A549 (cell line): ENCODE measurements at regions of chr12 and their contacts with region 1.

Region 1: DNA sequence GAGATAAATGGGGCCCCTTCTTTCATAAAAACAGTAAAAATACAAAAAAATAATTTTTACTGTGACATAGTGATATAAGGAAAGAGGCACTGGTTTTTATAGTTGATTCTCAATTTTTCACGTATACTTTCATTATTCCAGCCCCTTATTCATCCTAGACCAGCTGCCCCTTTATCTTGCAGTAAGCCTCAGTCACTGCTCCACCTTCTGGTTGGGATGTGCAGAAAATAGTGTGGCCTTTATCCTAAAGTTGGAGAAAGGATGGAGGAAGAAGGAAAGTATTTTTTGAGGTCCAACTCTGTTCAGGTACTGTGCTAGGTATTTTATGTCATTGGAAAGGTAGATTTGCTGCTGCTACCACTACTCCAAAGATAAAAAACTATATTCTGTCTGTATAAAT is 172.7 kb downstream of the ANO6 start:
- DNase-seq: peak; percentile 51 to 54
- ATAC-seq: peak; percentile 82 to 89
- H3K4me3 ChIP-seq: no peak overlapping the region
- H3K27ac ChIP-seq: no peak overlapping the region
- H3K4me1 ChIP-seq: no peaks in the 10 kb centered on the region
- CTCF ChIP-seq: peak; percentile 78
- EP300 ChIP-seq: no peak
- POLR2A ChIP-seq: no peak
- RAD21 ChIP-seq: peak; percentile 74 to 84

Region 2: GRCh38 chr12:44774815-44775411 is 613.6 kb before region 1 on chr12:
- CTCF ChIA-PET with region 1: no interaction called
- POLR2A ChIA-PET with region 1: no interaction called
- DNase-seq: peak; percentile 3 to 42
- ATAC-seq: peak; percentile 34 to 77; a peak in 3 of 6 replicates
- H3K4me3 ChIP-seq: no peak overlapping the region
- H3K27ac ChIP-seq: no peak overlapping the region
- H3K4me1 ChIP-seq: no peaks in the 10 kb centered on the region
- CTCF ChIP-seq: peak; percentile 60
- EP300 ChIP-seq: no peak
- POLR2A ChIP-seq: no peak
- RAD21 ChIP-seq: peak; percentile 32 to 54; a peak in 4 of 5 replicates

Region 3: GRCh38 chr12:45183246-45183645 is 205.3 kb before region 1 on chr12:
- CTCF ChIA-PET with region 1: interaction called, 30 read pairs
- POLR2A ChIA-PET with region 1: no interaction called
- DNase-seq: peak; percentile 12 to 13
- ATAC-seq: peak in 1 of 2 experiments; percentile 54; a peak in 2 of 6 replicates
- H3K4me3 ChIP-seq: no peak overlapping the region
- H3K27ac ChIP-seq: no peak overlapping the region
- H3K4me1 ChIP-seq: no peaks in the 10 kb centered on the region
- CTCF ChIP-seq: peak; percentile 52
- EP300 ChIP-seq: no peak
- POLR2A ChIP-seq: no peak
- RAD21 ChIP-seq: peak; percentile 72 to 73

Region 4: DNA sequence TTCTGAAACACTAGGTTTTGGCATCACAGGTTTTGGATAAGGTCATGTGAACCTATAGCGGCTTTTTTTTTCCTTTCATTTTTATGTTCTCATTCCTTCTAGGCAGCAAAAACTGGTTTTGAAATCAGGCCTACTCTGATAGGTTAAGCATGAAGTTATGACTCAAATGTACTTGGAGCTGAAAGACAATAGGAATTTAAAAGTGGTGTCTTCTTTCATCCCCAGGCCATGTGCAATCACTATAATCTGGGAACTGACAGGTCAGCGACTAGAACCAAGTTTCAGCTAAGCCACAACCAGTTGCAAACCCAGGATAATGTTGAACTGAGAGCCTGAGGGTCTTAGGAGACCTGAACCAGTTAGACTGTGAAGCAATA is 98.4 kb before region 1 on chr12:
- CTCF ChIA-PET with region 1: interaction called, 11 read pairs
- POLR2A ChIA-PET with region 1: no interaction called
- DNase-seq: peak in 1 of 2 experiments; percentile 38
- ATAC-seq: peak in 1 of 2 experiments; percentile 54; a peak in 3 of 6 replicates
- H3K4me3 ChIP-seq: no peak overlapping the region
- H3K27ac ChIP-seq: no peak overlapping the region
- H3K4me1 ChIP-seq: peaks cover 33% of the 10 kb centered on the region
- CTCF ChIP-seq: no peak
- EP300 ChIP-seq: no peak
- POLR2A ChIP-seq: no peak
- RAD21 ChIP-seq: no peak

Region 5: GRCh38 chr12:45411626-45412025 is 23.1 kb after region 1 on chr12:
- CTCF ChIA-PET with region 1: interaction called, 11 read pairs
- POLR2A ChIA-PET with region 1: no interaction called
- DNase-seq: no peak
- ATAC-seq: no peak
- H3K4me3 ChIP-seq: no peak overlapping the region
- H3K27ac ChIP-seq: no peak overlapping the region
- H3K4me1 ChIP-seq: peaks cover 13% of the 10 kb centered on the region; the same call in 2 of the 3 replicates
- CTCF ChIP-seq: no peak
- EP300 ChIP-seq: no peak
- POLR2A ChIP-seq: no peak
- RAD21 ChIP-seq: no peak

Region 6: GRCh38 chr12:45435945-45436710 is 47.6 kb after region 1 on chr12:
- CTCF ChIA-PET with region 1: no interaction called
- POLR2A ChIA-PET with region 1: no interaction called
- DNase-seq: no peak
- ATAC-seq: peak in 1 of 2 experiments; percentile 31; a peak in 3 of 6 replicates
- H3K4me3 ChIP-seq: no peak overlapping the region
- H3K27ac ChIP-seq: no peak overlapping the region
- H3K4me1 ChIP-seq: no peaks in the 10 kb centered on the region
- CTCF ChIP-seq: no peak
- EP300 ChIP-seq: no peak
- POLR2A ChIP-seq: no peak
- RAD21 ChIP-seq: no peak

Region 7: DNA sequence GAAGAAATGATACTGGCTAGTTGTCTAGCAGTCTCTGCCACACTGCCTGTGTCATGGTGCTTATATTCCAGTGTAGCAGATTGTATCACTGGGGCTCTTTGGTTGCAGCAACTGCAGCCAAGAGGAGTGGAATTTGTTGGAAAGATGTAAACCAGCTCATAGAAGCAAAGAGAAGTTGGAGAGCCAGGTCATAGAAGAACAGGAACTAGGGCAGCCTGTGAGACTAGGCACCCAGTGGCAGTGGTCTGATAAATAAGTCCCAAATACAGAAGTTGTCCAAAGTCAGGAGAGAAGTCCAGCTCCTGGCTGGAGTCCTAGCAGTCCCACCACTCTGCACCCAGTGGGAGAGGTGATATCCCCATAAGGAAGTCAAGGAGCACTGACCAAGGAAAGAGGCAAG is 168.5 kb after region 1 on chr12:
- CTCF ChIA-PET with region 1: no interaction called
- POLR2A ChIA-PET with region 1: no interaction called
- DNase-seq: no peak
- ATAC-seq: no peak; a peak in 1 of 6 replicates
- H3K4me3 ChIP-seq: no peak overlapping the region
- H3K27ac ChIP-seq: no peak overlapping the region
- H3K4me1 ChIP-seq: no peaks in the 10 kb centered on the region
- CTCF ChIP-seq: no peak
- EP300 ChIP-seq: no peak
- POLR2A ChIP-seq: no peak
- RAD21 ChIP-seq: no peak